Activated CD4-positive, alpha-beta T cell treated with anti-CD3 and anti-CD28 coated beads for 36 hours (primary cell): ENCODE measurements at regions of chr7 and their contacts with region 1.

Region 1: GRCh38 chr7:92648067-92648466 is 57.9 kb upstream of the FAM133B start:
- DNase-seq: no peak
- ATAC-seq: peak; percentile 58
- H3K4me3 Mint-ChIP-seq: no peak overlapping the region
- H3K27ac Mint-ChIP-seq: peak overlapping the region; percentile 85
- H3K4me1 Mint-ChIP-seq: peaks cover 86% of the 10 kb centered on the region
- H3K27me3 Mint-ChIP-seq: no peaks in the 10 kb centered on the region

Region 2: DNA sequence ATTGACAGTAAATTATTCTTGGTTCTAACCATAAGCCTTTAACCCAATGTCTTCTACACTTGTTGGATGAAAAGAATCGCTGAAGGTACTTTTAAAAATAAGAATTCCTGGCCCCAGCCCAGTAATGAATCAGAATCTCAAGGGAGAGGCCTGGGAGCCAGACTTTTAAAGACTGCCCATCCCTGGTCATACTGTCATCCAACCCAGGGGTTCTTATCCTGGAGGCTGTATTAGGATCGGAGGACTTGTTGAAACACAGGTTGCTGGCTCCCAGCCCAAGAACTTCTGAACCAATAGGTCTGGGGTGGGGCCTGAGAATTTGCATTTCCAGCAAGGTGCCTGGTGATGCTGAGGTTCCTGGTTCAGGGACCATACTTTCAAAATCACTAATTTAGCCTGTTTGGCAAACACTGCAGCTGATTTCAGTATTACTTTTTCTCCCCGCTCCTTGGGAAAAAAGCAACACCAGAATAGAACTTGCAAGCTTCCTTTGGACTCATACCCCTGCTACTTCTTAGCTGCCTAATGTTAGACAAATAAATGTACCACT is 21.6 kb after region 1 on chr7:
- CTCF ChIA-PET with region 1: interaction called, 8 read pairs
- POLR2A ChIA-PET with region 1: no interaction called
- intact Hi-C with region 1: loop called in 1 of 2 experiments (anchors 1 kb)
- DNase-seq: no peak
- ATAC-seq: no peak
- H3K4me3 Mint-ChIP-seq: no peak overlapping the region
- H3K27ac Mint-ChIP-seq: no peak overlapping the region
- H3K4me1 Mint-ChIP-seq: peaks cover 49% of the 10 kb centered on the region
- H3K27me3 Mint-ChIP-seq: no peaks in the 10 kb centered on the region

Region 3: GRCh38 chr7:92682903-92683539 is 35.0 kb after region 1 on chr7:
- CTCF ChIA-PET with region 1: no interaction called
- POLR2A ChIA-PET with region 1: no interaction called
- intact Hi-C with region 1: loop called (anchors 1 to 2 kb)
- DNase-seq: no peak
- ATAC-seq: peak; percentile 53
- H3K4me3 Mint-ChIP-seq: peak overlapping the region; percentile 39
- H3K27ac Mint-ChIP-seq: peak overlapping the region; percentile 88
- H3K4me1 Mint-ChIP-seq: peaks cover 83% of the 10 kb centered on the region
- H3K27me3 Mint-ChIP-seq: no peaks in the 10 kb centered on the region